ENCODE measurements at regions of chr5 and their contacts with region 1.

Region 1: GRCh38 chr5:150497274-150497988 is 10.5 kb upstream of the NDST1 start:
- DNase-seq: peak; percentile 83
- H3K4me3 ChIP-seq: peak overlapping the region; percentile 47
- H3K27ac ChIP-seq: peak overlapping the region; percentile 91
- H3K27me3 ChIP-seq: no peaks in the 10 kb centered on the region
- CTCF ChIP-seq: no peak

Region 2: GRCh38 chr5:150486402-150487198 is 10.8 kb before region 1 on chr5:
- CTCF ChIA-PET with region 1: interaction called, 3 read pairs
- POLR2A ChIA-PET with region 1: interaction called, 12 read pairs
- DNase-seq: no peak
- H3K4me3 ChIP-seq: peak overlapping the region; percentile 87
- H3K27ac ChIP-seq: peak overlapping the region; percentile 77
- H3K27me3 ChIP-seq: no peaks in the 10 kb centered on the region
- CTCF ChIP-seq: no peak

Region 3: GRCh38 chr5:150511578-150512367 is 14.3 kb after region 1 on chr5:
- CTCF ChIA-PET with region 1: interaction called, 4 read pairs
- POLR2A ChIA-PET with region 1: interaction called, 19 read pairs
- DNase-seq: no peak
- H3K4me3 ChIP-seq: no peak overlapping the region
- H3K27ac ChIP-seq: peak overlapping the region; percentile 32
- H3K27me3 ChIP-seq: no peaks in the 10 kb centered on the region
- CTCF ChIP-seq: no peak

Region 4: DNA sequence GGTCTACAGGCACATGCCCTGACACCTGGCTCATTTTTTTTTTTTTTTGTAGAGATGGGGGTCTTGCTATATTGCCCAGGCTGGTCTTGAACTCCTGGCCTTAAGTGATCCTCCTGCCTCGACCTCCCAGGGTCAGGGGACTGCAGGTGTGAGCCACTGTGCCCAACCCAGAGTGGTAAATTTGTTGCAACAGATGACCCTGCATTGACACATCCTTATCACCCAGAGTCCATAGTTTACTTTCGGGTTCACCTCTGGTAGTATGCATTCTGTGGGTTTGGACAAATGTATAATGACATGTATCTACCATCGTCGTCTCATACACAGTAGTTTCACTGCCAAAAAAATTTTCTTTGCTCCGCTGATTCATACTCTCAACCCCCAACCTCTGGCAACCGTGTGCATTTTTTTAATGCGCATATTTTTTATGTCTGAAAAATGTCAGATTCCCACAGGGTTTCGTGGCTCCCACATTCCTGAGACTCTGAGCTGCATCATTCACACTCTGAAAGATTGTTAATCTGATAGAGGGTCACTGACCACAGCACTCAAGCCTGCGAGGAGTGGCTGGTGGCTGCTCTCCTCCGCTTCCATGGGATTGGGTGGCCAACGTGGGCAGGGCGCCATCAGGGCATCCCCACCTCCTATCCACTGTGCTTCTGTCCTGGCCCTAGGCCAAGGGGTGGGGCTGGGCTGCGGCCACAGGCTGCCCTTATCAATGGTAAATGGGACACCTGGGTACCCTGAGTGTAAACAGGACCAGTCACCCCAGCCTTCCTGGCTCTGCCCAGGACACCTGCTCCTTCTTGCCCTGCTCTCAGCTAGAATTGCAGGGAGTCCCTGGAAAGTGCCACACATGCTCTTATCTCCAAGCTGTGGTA is 20.1 kb after region 1 on chr5:
- CTCF ChIA-PET with region 1: interaction called, 4 read pairs
- POLR2A ChIA-PET with region 1: interaction called, 19 read pairs
- DNase-seq: peak; percentile 85
- H3K4me3 ChIP-seq: no peak overlapping the region
- H3K27ac ChIP-seq: peak overlapping the region; percentile 94
- H3K27me3 ChIP-seq: no peaks in the 10 kb centered on the region
- CTCF ChIP-seq: no peak

Region 5: DNA sequence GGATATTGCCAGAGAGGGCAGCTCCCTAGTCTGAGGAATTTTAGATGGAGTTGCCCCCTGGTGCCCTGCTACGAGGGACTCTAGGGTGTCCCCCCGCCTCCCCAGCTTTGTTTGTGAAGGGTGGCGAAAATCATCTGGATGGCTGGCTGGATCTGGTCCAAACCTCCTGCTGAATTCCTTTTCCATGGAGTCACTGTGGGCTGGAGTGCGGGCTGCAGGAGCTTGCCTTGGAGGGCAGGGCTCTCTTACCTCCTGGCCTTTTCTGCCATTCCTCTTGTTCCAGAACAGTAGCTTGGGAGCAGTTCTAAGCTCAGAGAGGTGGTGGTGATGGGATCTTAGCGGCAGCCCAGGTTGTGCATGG is 145.1 kb after region 1 on chr5:
- CTCF ChIA-PET with region 1: interaction called, 13 read pairs
- POLR2A ChIA-PET with region 1: no interaction called
- DNase-seq: peak; percentile 64
- H3K4me3 ChIP-seq: peak overlapping the region; percentile 74
- H3K27ac ChIP-seq: peak overlapping the region; percentile 95
- H3K27me3 ChIP-seq: no peaks in the 10 kb centered on the region
- CTCF ChIP-seq: no peak

Measured in AG04450 (cell line).